HEK293 (cell line): ENCODE measurements at regions of chr3 and their contacts with region 1.

Region 1: DNA sequence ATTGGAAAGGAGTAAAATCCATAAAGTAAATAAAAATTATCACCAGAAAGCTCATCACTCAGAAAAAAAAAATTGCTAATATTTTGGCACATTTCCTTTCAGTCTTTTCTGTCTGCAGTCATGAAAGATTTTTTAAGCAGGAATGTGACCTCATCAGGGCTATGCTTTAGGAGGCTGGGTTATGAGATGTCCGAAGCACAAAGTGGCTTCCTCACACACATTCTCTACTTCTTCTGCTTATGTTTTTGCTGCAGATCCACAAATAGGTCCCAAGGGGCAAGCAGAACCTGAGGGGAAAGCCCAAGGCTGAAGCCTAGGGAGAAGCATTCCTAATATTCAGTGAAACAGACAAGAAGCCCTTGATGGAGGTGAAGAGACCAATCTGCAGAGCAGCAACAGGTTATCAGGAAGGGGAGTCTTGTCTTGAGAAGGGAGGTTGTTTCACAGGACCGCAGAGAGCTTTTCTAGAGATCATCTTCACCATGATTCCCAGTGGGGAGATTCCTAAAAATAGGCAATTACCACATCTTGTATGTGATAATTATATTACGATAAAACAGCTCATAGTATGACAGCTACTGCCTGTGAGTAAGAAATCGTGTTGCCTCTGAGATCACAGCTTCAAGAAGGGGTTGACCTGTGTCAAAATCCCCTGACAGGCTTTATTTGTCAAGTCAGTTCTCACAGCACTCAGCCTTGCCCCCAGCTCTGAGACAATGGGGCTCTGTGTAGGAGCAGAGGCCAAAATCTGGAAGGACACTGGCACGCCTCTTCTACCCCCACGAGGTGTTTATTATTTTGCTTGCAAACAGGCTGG is 60.5 kb downstream of the IGF2BP2 start:
- H3K4me3 ChIP-seq: no peak overlapping the region
- H3K27ac ChIP-seq: no peak overlapping the region
- H3K4me1 ChIP-seq: peaks cover 22% of the 10 kb centered on the region
- CTCF ChIP-seq: no peak

Region 2: DNA sequence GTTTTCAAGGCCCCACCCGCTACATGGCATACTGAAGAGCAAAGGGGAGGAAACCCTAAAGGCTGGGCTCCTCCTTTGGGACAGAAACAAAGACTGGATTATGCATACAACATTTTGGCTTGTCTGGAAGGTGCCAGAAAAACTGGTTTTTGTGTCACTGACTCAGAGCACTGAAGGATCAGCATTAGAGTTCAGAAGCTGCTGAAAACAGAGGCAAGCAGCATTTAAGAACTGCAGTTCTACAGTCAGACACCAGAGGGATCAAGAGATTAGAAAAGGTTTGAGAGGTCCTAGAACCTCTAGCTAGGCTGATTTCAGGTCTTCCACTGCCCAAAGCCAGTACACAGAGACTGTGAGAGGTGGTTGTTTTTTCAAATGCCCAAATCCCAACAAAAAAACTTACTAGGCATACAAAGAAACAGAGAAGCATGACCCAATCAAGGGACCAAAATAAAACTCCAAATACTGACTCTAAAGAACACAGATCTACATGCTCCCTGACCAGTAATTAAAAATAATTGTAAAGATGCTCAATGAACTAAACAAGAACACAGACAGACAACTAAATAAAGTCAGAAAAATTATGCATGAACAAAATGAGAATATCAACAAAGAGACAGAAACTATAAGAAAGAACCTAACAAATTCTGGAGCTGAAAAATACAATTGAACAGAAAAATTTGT is 87.1 kb before region 1 on chr3:
- CTCF ChIA-PET with region 1: interaction called, 11 read pairs
- POLR2A ChIA-PET with region 1: no interaction called
- H3K4me3 ChIP-seq: no peak overlapping the region
- H3K27ac ChIP-seq: no peak overlapping the region
- H3K4me1 ChIP-seq: no peaks in the 10 kb centered on the region
- CTCF ChIP-seq: no peak

Region 3: GRCh38 chr3:185744997-185745843 is 19.2 kb before region 1 on chr3:
- CTCF ChIA-PET with region 1: interaction called, 10 read pairs
- POLR2A ChIA-PET with region 1: no interaction called
- H3K4me3 ChIP-seq: no peak overlapping the region
- H3K27ac ChIP-seq: no peak overlapping the region
- H3K4me1 ChIP-seq: peaks cover 18% of the 10 kb centered on the region
- CTCF ChIP-seq: no peak

Region 4: DNA sequence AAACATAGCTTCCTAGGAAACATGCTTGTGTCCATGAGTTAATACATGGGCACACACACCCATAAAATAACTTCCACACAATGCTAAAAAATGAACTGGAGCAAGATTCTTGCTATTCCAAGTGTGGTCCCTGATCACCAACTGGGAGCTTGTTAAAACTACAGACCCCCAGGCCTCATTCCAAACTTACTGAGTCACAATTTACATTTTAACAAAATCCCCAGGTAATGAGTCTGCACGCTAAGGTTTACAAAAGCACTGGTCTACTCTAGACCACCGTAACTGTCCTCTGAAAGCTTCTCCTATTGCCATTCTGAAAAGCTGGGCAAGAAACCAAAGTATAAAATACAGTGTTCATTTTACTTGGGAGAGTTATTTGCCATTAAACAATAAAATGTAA is 15.1 kb after region 1 on chr3:
- CTCF ChIA-PET with region 1: interaction called, 35 read pairs
- POLR2A ChIA-PET with region 1: no interaction called
- H3K4me3 ChIP-seq: no peak overlapping the region
- H3K27ac ChIP-seq: no peak overlapping the region
- H3K4me1 ChIP-seq: no peaks in the 10 kb centered on the region; the same call in 1 of the 2 replicates
- CTCF ChIP-seq: no peak

Region 5: DNA sequence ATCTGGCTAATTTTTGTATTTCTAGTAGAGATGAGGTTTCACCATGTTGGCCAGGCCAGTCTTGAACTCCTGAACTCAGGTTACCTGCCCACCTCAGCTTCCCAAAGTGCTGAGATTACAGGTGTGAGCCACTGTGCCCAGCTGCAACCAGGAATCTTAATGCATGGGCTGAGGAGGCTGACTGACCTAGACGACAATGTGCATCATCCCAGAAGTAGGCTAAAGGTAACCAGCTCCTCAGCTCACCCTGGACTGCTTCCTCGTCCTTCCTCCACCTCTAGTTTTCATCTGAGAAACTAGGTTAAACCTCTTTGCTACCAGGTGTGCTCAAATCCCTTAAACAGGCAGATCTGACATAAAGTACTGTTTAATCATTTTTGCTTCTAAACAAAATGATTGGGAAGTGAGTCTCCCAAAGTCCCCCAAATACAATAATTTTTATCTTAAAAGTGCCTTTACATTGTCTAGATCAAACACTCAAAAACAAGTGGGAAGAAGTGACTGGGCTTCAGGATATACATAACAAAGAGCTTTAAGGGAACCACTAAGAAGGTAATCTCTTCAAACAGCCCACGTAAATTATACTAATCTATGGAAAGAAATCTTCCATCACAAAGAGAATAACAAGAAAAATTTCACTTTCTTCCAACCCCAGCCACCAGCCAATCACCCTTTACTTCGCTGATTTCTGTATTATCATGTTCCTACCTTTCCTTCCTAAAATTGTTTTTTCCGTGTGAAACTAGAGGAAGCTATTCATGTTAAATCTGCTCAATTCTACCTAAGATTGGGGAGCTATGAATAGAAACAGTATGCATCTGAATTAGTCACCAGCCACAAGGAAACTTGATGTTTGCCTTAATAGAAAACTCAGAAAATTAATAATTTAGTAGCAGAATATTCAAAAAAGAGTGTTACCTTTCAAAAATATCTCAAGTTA is 25.8 kb after region 1 on chr3:
- CTCF ChIA-PET with region 1: interaction called, 10 read pairs
- POLR2A ChIA-PET with region 1: no interaction called
- H3K4me3 ChIP-seq: no peak overlapping the region
- H3K27ac ChIP-seq: no peak overlapping the region
- H3K4me1 ChIP-seq: peaks cover 9% of the 10 kb centered on the region
- CTCF ChIP-seq: no peak

Region 6: GRCh38 chr3:186083746-186084145 is 319.4 kb after region 1 on chr3:
- CTCF ChIA-PET with region 1: no interaction called
- POLR2A ChIA-PET with region 1: no interaction called
- H3K4me3 ChIP-seq: no peak overlapping the region
- H3K27ac ChIP-seq: no peak overlapping the region
- H3K4me1 ChIP-seq: no peaks in the 10 kb centered on the region
- CTCF ChIP-seq: no peak